Activated CD4-positive, alpha-beta T cell treated with anti-CD3 and anti-CD28 coated beads, Interleukin-2, amount 10 ng/mL, durations not matched to agents 24 days and 14 days (primary cell): ENCODE measurements at regions of chr7 and their contacts with region 1.

Region 1: DNA sequence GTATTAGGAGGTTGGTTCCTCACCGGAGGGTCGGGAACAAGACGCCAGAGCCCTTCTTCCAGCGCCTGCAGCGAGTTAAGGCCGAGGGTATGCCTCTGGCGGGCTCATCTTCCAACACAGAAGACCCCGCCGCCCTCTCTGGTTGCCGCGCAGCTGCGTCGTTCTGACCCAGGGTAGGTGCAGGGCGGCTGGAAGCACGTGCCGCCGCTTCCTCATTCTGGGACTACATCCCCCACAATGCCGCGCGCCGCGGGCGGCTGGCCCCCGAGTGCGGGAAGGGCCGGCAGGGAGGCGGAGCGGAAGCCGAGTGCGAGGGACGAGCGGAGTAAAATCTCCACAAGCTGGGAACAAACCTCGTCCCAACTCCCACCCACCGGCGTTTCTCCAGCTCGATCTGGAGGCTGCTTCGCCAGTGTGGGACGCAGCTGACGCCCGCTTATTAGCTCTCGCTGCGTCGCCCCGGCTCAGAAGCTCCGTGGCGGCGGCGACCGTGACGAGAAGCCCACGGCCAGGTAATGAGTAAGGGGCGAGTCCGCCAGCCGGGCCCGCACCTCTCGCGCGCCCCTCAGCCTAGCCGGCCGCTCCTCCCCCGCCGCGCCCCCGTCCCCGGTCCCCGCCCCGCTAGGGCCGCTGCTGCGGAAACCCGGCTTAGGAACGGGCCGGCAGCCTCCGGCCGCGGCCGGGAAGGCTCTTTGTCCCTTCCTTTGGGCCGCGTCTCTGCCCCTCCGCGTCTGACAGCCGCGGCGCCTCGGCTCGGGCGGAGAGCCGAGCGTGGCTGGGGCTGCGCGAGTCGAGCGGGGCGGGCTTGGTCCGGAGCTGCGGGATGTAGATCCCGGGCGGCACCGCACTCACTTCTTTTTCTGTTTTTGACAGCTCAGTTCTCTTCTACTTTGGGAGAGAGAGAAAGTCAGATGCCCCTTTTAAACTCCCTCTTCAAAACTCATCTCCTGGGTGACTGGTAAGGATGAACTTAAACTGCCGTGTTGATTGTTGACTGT is at the start of gene CCDC126:
- DNase-seq: peak; percentile 95
- H3K4me3 Mint-ChIP-seq: peak within 1 kb of the TSS; percentile 92
- H3K27ac Mint-ChIP-seq: peak within 1 kb of the TSS; percentile 85
- H3K4me1 Mint-ChIP-seq: peaks cover 52% of the 10 kb centered on the region
- H3K27me3 Mint-ChIP-seq: no peaks in the 10 kb centered on the region
- total RNA-seq, gene CCDC126: 6.2 and 8.1 TPM in 2 replicates

Region 2: GRCh38 chr7:21945454-21946227 is 1651.8 kb before region 1 on chr7 and contains the start of gene CDCA7L:
- intact Hi-C with region 1: loop called (anchors 10 kb)
- DNase-seq: peak; percentile 90
- H3K4me3 Mint-ChIP-seq: peak within 1 kb of the TSS; percentile 96
- H3K27ac Mint-ChIP-seq: peak within 1 kb of the TSS; percentile 95
- H3K4me1 Mint-ChIP-seq: peaks cover 60% of the 10 kb centered on the region
- H3K27me3 Mint-ChIP-seq: peaks cover 16% of the 10 kb centered on the region
- total RNA-seq, gene CDCA7L: 111 and 114 TPM in 2 replicates

Region 3: DNA sequence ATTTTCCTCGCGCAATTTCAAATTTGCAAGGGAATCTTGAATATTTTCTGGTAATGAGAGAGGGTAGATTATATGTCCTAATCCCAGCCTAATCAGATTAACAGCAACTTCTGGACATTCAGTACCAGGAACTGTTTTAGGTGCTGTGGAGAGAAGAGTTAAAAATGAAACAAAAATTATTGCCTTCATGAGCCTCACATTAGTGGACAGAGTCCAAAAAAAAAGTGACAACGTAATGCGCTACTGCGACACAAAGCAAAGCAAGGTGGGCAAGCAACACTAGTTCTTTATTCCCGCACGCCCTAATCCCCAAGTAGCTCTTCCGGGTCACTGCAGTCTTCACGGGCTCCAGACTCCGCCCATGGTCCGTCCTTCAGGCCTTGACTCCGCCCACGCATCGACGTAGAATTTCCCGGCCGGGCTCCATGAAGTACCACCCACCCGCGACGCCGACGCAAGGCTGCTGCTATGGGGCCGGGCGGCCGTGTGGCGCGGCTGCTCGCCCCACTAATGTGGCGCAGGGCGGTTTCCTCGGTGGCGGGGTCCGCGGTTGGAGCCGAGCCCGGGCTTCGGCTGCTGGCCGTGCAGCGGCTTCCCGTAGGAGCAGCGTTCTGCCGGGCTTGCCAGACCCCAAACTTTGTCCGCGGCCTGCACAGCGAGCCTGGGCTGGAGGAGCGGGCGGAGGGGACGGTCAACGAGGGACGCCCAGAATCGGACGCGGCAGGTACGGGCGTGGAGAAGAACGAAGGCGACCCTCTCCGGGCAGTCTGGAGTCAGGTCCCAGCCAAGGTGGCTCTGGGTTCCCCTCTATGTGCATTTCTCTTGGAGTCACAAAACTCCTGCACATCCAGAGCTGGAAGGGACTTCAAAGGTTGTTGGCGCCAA is 298.3 kb before region 1 on chr7 and contains the start of gene MALSU1:
- intact Hi-C with region 1: loop called (anchors 2 kb)
- DNase-seq: peak; percentile 99
- H3K4me3 Mint-ChIP-seq: peak within 1 kb of the TSS; percentile 93
- H3K27ac Mint-ChIP-seq: peak within 1 kb of the TSS; percentile 90
- H3K4me1 Mint-ChIP-seq: peaks cover 28% of the 10 kb centered on the region
- H3K27me3 Mint-ChIP-seq: no peaks in the 10 kb centered on the region
- total RNA-seq, gene MALSU1: 92.8 and 98.8 TPM in 2 replicates

Region 4: GRCh38 chr7:23474094-23474828 is 123.1 kb before region 1 on chr7:
- intact Hi-C with region 1: loop called (anchors 5 kb)
- DNase-seq: peak; percentile 96
- H3K4me3 Mint-ChIP-seq: peak overlapping the region; percentile 84
- H3K27ac Mint-ChIP-seq: peak overlapping the region; percentile 75
- H3K4me1 Mint-ChIP-seq: peaks cover 27% of the 10 kb centered on the region
- H3K27me3 Mint-ChIP-seq: peaks cover 60% of the 10 kb centered on the region

Region 5: DNA sequence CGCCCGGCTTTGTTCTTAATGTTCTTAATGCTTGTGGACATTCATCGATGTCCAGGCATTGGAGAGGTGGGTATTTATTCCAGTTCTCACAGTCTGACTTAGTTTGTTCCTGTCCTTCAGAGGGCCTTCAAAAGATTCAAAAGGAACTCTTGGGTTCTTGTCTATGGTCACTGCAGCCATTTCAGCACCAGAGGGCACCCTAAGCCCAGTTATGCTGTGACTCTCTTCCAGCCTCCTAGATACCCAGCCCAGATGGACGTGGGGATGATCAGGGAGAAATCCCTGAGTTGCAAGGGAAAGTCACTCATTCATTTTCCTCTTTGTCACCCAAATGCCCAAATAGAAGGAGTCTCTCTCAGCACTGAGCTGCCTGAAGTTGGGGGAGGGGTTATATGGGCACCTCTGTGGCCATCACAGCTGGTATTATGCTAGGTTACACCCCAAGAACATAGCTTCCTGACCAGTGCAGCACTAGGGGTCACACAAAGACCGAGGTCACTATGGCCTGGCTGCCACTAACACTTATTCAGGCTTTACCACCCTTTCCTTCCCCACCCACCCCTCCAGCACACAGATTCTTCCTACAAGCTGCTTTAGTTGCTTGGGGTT is 26.7 kb before region 1 on chr7:
- intact Hi-C with region 1: loop called (anchors 2 kb)
- DNase-seq: peak; percentile 90
- H3K4me3 Mint-ChIP-seq: no peak overlapping the region
- H3K27ac Mint-ChIP-seq: no peak overlapping the region
- H3K4me1 Mint-ChIP-seq: no peaks in the 10 kb centered on the region
- H3K27me3 Mint-ChIP-seq: peaks cover 8% of the 10 kb centered on the region

Region 6: DNA sequence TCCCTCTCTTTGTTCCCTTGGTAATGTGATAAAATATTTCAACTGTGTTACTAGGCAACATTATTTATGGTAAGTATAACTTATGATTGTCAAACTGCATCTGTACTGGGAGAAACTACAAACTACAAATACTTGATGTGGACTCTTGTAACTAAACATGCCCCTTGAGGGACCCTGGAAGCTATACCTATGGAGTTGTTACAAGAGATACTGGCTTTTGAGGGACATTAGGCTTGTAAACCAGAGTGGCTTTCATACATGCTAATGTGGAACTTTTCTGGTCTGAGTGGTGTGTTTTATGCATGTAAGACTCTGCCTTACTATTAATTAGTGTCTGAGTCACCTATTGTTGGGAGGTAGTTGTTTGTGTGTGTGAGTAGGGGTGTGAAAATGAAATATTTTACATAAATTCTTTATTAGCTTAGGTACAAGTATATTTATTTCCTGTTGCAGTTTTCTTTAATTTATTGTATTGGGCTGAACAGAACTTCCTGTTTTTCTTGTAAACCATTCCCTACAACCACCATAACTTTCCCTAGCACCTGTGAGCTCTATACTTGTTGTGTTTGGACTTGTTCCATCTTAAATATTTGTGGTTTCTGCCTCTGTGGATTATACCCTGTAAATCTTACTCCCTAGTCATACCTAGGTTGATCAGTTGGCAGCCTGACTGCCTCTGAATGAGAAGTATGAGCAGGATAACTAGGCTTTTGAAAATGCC is 162.4 kb after region 1 on chr7:
- intact Hi-C with region 1: no loop called
- DNase-seq: no peak
- H3K4me3 Mint-ChIP-seq: no peak overlapping the region
- H3K27ac Mint-ChIP-seq: no peak overlapping the region
- H3K4me1 Mint-ChIP-seq: peaks cover 2% of the 10 kb centered on the region
- H3K27me3 Mint-ChIP-seq: peaks cover 4% of the 10 kb centered on the region

Region 7: GRCh38 chr7:24907311-24907886 is 1310.0 kb after region 1 on chr7:
- intact Hi-C with region 1: loop called (anchors 5 kb)
- DNase-seq: peak; percentile 84
- H3K4me3 Mint-ChIP-seq: no peak overlapping the region
- H3K27ac Mint-ChIP-seq: no peak overlapping the region
- H3K4me1 Mint-ChIP-seq: peaks cover 33% of the 10 kb centered on the region
- H3K27me3 Mint-ChIP-seq: no peaks in the 10 kb centered on the region